GM12878 (cell line): ENCODE measurements at regions of chr6 and their contacts with region 1.

Region 1: GRCh38 chr6:129370268-129370916 is 339.6 kb downstream of the ARHGAP18 start:
- DNase-seq: no peak
- ATAC-seq: peak; percentile 61; the same call in 2 of the 3 replicates
- H3K4me3 ChIP-seq: no peak overlapping the region
- H3K27ac ChIP-seq: no peak overlapping the region
- H3K4me1 ChIP-seq: no peaks in the 10 kb centered on the region
- H3K27me3 ChIP-seq: no peaks in the 10 kb centered on the region
- CTCF ChIP-seq: peak; percentile 55 to 63 (median 60)
- EP300 ChIP-seq: no peak
- POLR2A ChIP-seq: no peak
- RAD21 ChIP-seq: peak; percentile 62

Region 2: DNA sequence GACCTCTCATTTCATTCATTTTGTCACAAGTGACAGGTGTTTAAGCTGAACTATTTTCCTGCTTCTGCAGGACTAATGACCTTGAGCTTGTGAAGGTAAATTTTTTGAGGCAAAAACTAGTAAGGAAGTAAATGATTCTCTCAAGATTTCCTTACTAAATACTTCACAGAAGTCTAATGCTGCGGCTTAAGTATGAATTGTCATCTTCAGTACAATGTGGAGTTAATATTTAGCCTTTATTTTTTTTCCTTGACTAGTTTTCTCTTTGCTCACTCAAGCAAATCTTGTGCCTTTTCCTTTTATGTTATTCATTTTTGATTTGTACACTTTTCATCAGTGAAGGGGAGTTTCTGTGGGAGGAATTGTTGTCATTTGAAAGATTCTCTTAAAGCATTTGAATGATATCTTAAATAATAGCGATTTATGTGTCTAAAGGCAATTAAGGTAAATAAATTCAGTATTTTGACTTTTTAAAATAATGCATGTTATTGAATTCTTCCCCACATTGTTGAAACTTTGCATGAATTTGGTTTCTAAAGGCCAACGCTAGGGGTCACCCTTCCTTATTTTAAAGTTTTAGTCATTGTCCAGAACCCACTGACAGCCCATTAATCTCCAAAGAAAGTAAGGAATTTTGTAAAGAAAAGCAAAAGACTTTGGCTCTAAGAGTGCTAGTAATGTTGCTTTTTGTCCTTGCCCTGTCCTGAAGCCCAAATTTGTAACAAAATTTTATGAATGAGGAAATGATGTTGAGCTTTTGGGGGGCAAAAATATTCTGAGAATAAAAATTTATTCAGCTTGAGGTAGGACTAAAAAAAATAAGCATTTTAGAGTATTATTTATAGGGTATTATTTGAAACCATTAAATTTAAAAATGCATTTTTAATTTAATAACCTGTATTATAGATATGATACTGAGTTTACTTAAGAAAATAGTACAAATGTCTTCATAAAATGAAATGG is 644.8 kb before region 1 on chr6:
- CTCF ChIA-PET with region 1: interaction called, 4 read pairs
- POLR2A ChIA-PET with region 1: no interaction called
- RAD21 ChIA-PET with region 1: interaction called, 8 read pairs
- SMC1A ChIA-PET with region 1: no interaction called
- in situ Hi-C with region 1: no loop called
- intact Hi-C with region 1: loop called (anchors 5 kb)
- DNase-seq: no peak
- ATAC-seq: peak; percentile 56; the same call in 2 of the 3 replicates
- H3K4me3 ChIP-seq: no peak overlapping the region
- H3K27ac ChIP-seq: no peak overlapping the region
- H3K4me1 ChIP-seq: no peaks in the 10 kb centered on the region
- H3K27me3 ChIP-seq: no peaks in the 10 kb centered on the region
- CTCF ChIP-seq: peak; percentile 54 to 65 (median 56)
- EP300 ChIP-seq: no peak
- POLR2A ChIP-seq: no peak
- RAD21 ChIP-seq: peak; percentile 53

Region 3: GRCh38 chr6:128807577-128807976 is 562.8 kb before region 1 on chr6:
- CTCF ChIA-PET with region 1: interaction called, 4 read pairs
- POLR2A ChIA-PET with region 1: no interaction called
- RAD21 ChIA-PET with region 1: interaction called, 4 read pairs
- SMC1A ChIA-PET with region 1: interaction called, 4 read pairs
- in situ Hi-C with region 1: no loop called
- intact Hi-C with region 1: loop called (anchors 10 kb)
- DNase-seq: no peak
- ATAC-seq: peak; percentile 38; the same call in 1 of the 3 replicates
- H3K4me3 ChIP-seq: no peak overlapping the region
- H3K27ac ChIP-seq: no peak overlapping the region
- H3K4me1 ChIP-seq: no peaks in the 10 kb centered on the region
- H3K27me3 ChIP-seq: no peaks in the 10 kb centered on the region; a peak in 1 of 4 replicates
- CTCF ChIP-seq: peak; percentile 22 to 31 (median 26); a peak in 4 of 6 replicates
- EP300 ChIP-seq: no peak
- POLR2A ChIP-seq: no peak
- RAD21 ChIP-seq: peak; percentile 43; the same call in 1 of the 2 replicates

Region 4: GRCh38 chr6:129351807-129352206 is 18.6 kb before region 1 on chr6:
- CTCF ChIA-PET with region 1: interaction called, 10 read pairs
- POLR2A ChIA-PET with region 1: no interaction called
- RAD21 ChIA-PET with region 1: interaction called, 3 read pairs
- SMC1A ChIA-PET with region 1: interaction called, 4 read pairs
- in situ Hi-C with region 1: no loop called
- intact Hi-C with region 1: no loop called
- DNase-seq: no peak
- ATAC-seq: no peak
- H3K4me3 ChIP-seq: no peak overlapping the region
- H3K27ac ChIP-seq: no peak overlapping the region
- H3K4me1 ChIP-seq: no peaks in the 10 kb centered on the region
- H3K27me3 ChIP-seq: no peaks in the 10 kb centered on the region
- CTCF ChIP-seq: no peak
- EP300 ChIP-seq: no peak
- POLR2A ChIP-seq: no peak
- RAD21 ChIP-seq: no peak

Region 5: GRCh38 chr6:129359811-129360681 is 10.3 kb before region 1 on chr6:
- CTCF ChIA-PET with region 1: interaction called, 11 read pairs
- POLR2A ChIA-PET with region 1: no interaction called
- RAD21 ChIA-PET with region 1: interaction called, 3 read pairs
- SMC1A ChIA-PET with region 1: no interaction called
- in situ Hi-C with region 1: no loop called
- intact Hi-C with region 1: no loop called
- DNase-seq: no peak
- ATAC-seq: no peak
- H3K4me3 ChIP-seq: no peak overlapping the region
- H3K27ac ChIP-seq: no peak overlapping the region
- H3K4me1 ChIP-seq: no peaks in the 10 kb centered on the region
- H3K27me3 ChIP-seq: no peaks in the 10 kb centered on the region; a peak in 1 of 4 replicates
- CTCF ChIP-seq: no peak
- EP300 ChIP-seq: no peak
- POLR2A ChIP-seq: no peak
- RAD21 ChIP-seq: no peak